HepG2 (cell line): ENCODE measurements at regions of chr2 and their contacts with region 1.

Region 1: GRCh38 chr2:237603718-237604362 is 13.3 kb upstream of the RAB17 start:
- DNase-seq: peak; percentile 40
- ATAC-seq: no peak
- H3K4me3 ChIP-seq: peak overlapping the region in 1 of 3 experiments; percentile 14; a peak in 1 of 6 replicates
- H3K27ac ChIP-seq: no peak overlapping the region
- H3K4me1 ChIP-seq: peaks cover 69% of the 10 kb centered on the region
- H3K27me3 ChIP-seq: peaks cover 5 to 6% of the 10 kb centered on the region in 2 experiments; a peak in 4 of 5 replicates
- CTCF ChIP-seq: no peak
- EP300 ChIP-seq: no peak
- POLR2A ChIP-seq: no peak
- RAD21 ChIP-seq: no peak

Region 2: DNA sequence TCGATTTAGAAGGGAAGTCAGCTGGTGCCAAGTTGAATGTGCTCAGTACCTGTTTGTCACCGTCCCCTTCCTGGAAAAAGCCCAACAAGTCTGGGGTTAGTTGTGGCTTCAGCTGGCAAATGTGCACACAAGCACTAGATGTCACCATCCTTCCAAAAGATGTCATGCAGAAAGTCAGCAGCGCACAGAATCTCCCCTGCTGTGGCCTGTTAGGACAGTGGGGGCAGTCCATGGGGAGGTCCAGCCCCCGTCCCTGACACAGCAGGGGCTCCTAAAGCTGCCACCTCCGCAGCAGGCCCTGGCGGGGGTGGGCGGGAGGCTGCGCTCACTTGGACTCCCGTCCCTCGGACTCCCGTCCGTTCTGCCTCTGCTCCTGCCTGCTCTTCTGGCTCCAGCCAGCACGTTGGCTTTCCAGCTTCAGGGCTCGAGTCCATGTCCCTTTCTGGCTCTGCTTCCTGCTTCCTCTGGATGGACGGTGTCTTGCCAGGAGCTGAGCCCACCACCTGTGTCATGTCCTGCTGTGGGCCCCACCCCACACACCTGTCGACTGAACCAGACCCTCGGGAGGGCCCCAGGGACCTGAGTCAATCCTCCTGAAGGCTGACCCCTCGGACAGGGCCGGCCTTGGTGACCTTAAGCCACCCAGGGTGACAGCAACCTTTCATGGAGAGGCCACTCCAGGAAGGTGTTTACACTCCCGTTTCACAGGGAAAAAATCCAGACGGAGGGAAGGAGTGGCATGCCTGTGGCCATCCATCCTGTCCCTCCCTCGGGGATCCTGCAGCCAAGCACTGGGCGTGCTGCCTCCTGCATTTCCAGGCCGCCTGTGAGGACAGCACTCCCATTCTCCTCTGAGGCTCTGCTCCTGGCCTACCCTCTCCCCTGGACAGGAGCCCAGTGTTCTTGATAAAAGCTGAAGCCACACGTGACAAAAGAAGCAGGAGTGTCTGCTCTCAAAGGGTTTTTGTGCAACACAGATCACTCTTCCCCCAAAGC is 21.8 kb before region 1 on chr2:
- CTCF ChIA-PET with region 1: interaction called, 3 read pairs
- POLR2A ChIA-PET with region 1: interaction called, 13 read pairs
- in situ Hi-C with region 1: no loop called
- intact Hi-C with region 1: no loop called
- DNase-seq: peak; percentile 82
- ATAC-seq: peak; percentile 66
- H3K4me3 ChIP-seq: peak overlapping the region in 1 of 3 experiments; percentile 38; a peak in 3 of 6 replicates
- H3K27ac ChIP-seq: peak overlapping the region; percentile 66
- H3K4me1 ChIP-seq: peaks cover 57% of the 10 kb centered on the region
- H3K27me3 ChIP-seq: no peaks in the 10 kb centered on the region
- CTCF ChIP-seq: peak; percentile 82
- EP300 ChIP-seq: peak in 1 of 2 experiments; percentile 52; a peak in 2 of 4 replicates
- POLR2A ChIP-seq: no peak; a peak in 1 of 4 replicates
- RAD21 ChIP-seq: peak; percentile 70; the same call in 1 of the 2 replicates

Region 3: GRCh38 chr2:237614151-237614720 is 10.4 kb after region 1 on chr2:
- CTCF ChIA-PET with region 1: interaction called, 6 read pairs
- POLR2A ChIA-PET with region 1: interaction called, 9 read pairs
- in situ Hi-C with region 1: no loop called
- intact Hi-C with region 1: loop called (anchors 2 kb)
- DNase-seq: peak; percentile 100
- ATAC-seq: peak; percentile 98
- H3K4me3 ChIP-seq: peak overlapping the region in 1 of 3 experiments; percentile 21; a peak in 1 of 6 replicates
- H3K27ac ChIP-seq: no peak overlapping the region
- H3K4me1 ChIP-seq: peaks cover 39% of the 10 kb centered on the region
- H3K27me3 ChIP-seq: peaks cover 0 to 36% of the 10 kb centered on the region in 2 experiments; a peak in 3 of 5 replicates
- CTCF ChIP-seq: peak; percentile 61
- EP300 ChIP-seq: peak; percentile 88 to 96
- POLR2A ChIP-seq: no peak
- RAD21 ChIP-seq: no peak

Region 4: GRCh38 chr2:237685408-237685807 is 81.6 kb after region 1 on chr2:
- CTCF ChIA-PET with region 1: interaction called, 5 read pairs
- POLR2A ChIA-PET with region 1: no interaction called
- in situ Hi-C with region 1: no loop called
- intact Hi-C with region 1: loop called (anchors 1 kb)
- DNase-seq: peak; percentile 66
- ATAC-seq: peak; percentile 74
- H3K4me3 ChIP-seq: no peak overlapping the region
- H3K27ac ChIP-seq: no peak overlapping the region
- H3K4me1 ChIP-seq: peaks cover 83% of the 10 kb centered on the region
- H3K27me3 ChIP-seq: no peaks in the 10 kb centered on the region
- CTCF ChIP-seq: peak; percentile 80
- EP300 ChIP-seq: no peak
- POLR2A ChIP-seq: no peak
- RAD21 ChIP-seq: peak; percentile 49; the same call in 1 of the 2 replicates

Region 5: GRCh38 chr2:237774802-237775553 is 171.1 kb after region 1 on chr2:
- CTCF ChIA-PET with region 1: no interaction called
- POLR2A ChIA-PET with region 1: no interaction called
- in situ Hi-C with region 1: no loop called
- intact Hi-C with region 1: loop called (anchors 1 kb)
- DNase-seq: peak; percentile 79
- ATAC-seq: peak; percentile 97
- H3K4me3 ChIP-seq: no peak overlapping the region
- H3K27ac ChIP-seq: no peak overlapping the region
- H3K4me1 ChIP-seq: peaks cover 8% of the 10 kb centered on the region
- H3K27me3 ChIP-seq: no peaks in the 10 kb centered on the region
- CTCF ChIP-seq: peak; percentile 89
- EP300 ChIP-seq: no peak
- POLR2A ChIP-seq: no peak
- RAD21 ChIP-seq: peak; percentile 78